ENCODE measurements at regions of chr21 and their contacts with region 1.

Region 1: DNA sequence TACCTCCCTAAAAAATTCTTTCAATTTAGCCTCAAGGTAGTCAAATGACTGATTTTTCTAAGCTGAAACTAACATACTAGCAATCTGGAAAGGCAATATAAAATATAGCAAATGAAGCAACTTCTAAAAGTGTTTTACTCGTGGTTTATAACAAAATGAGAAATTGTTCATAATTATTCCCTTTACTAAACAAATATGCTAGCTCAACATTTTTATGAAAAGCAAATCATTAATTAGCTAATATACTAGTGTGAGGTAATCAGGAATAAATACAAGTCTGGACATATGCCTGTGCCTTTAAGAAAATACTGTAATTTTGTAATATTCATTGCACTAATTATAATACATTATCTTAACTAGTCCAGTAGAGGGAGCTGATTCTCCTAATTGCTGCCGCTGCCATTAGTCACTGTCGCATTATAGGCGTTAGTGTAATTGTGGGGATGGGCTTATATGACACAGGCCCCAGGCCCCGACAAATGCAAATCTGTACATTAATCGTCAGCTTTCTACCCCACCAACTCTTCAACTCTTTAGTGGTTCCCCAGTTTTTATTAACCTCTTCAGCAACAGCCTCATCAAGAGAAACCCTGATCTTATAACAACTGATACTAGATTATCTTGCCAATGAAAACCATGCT is 160.9 kb downstream of the GABPA start:
- DNase-seq: no peak
- H3K4me3 Mint-ChIP-seq: no peak overlapping the region
- H3K27ac Mint-ChIP-seq: no peak overlapping the region
- H3K4me1 Mint-ChIP-seq: peaks cover 11% of the 10 kb centered on the region
- H3K27me3 Mint-ChIP-seq: no peaks in the 10 kb centered on the region

Region 2: DNA sequence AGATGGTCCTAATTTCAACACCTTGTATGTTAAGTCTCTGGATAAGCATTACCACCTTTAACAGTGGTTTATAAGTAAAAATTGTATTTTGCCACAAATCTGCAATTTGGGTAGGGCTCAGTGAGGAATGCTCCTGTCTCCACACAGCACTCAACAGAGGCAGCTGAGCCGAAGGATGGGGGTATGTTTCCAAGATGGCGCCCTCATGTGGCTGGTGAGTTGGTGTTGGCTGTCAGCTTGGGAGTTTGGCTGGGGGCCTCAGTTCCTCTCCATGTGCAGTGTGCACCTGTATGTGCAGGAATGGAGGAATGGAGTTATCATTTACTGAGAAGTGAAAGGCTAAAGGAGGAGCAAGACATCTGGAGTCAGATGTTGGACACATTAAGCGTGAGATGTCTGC is 24.1 kb before region 1 on chr21:
- intact Hi-C with region 1: no loop called
- DNase-seq: no peak
- H3K4me3 Mint-ChIP-seq: no peak overlapping the region
- H3K27ac Mint-ChIP-seq: no peak overlapping the region
- H3K4me1 Mint-ChIP-seq: no peaks in the 10 kb centered on the region
- H3K27me3 Mint-ChIP-seq: peaks cover 3% of the 10 kb centered on the region

Region 3: GRCh38 chr21:26067836-26068594 is 172.3 kb after region 1 on chr21:
- intact Hi-C with region 1: loop called (anchors 10 kb)
- DNase-seq: no peak
- H3K4me3 Mint-ChIP-seq: no peak overlapping the region
- H3K27ac Mint-ChIP-seq: peak overlapping the region; percentile 17
- H3K4me1 Mint-ChIP-seq: peaks cover 44% of the 10 kb centered on the region
- H3K27me3 Mint-ChIP-seq: no peaks in the 10 kb centered on the region

Region 4: DNA sequence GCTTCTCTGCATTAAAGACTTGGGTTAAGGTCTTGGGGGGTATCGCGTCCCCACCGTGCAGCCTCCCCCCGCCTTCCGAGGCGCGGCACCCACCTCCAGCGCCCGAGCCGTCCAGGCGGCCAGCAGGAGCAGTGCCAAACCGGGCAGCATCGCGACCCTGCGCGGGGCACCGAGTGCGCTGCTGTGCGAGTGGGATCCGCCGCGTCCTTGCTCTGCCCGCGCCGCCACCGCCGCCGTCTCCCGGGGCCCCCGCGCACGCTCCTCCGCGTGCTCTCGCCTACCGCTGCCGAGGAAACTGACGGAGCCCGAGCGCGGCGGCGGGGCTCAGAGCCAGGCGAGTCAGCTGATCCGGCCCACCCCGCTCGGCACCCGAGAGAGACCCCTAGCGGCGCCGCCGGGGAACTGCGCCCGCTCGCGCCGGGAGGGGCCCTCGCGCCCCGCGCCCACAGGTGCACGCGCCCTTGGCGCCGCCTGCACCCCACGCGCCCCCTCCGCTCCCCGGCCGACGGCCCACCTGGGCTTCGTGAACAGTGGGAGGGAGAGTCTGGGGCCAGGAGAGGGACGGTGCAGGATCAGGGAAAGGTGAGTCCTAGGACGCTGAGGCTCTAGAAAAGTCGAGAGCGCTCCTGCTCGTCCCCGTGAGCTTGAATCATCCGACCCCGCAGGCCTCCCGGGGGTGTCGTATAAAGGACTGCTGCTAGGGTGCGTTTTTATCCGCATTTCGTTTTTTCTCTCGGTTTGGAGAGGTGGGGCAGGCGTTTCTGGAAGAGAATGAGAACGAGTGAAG is 275.0 kb after region 1 on chr21 and contains the start of gene APP:
- intact Hi-C with region 1: loop called (anchors 1 kb)
- DNase-seq: peak; percentile 86
- H3K4me3 Mint-ChIP-seq: peak within 1 kb of the TSS; percentile 94
- H3K27ac Mint-ChIP-seq: peak within 1 kb of the TSS; percentile 78
- H3K4me1 Mint-ChIP-seq: peaks cover 35% of the 10 kb centered on the region
- H3K27me3 Mint-ChIP-seq: peaks cover 6% of the 10 kb centered on the region
- total RNA-seq, gene APP: 85.7 and 86.5 TPM in 2 replicates

Region 5: GRCh38 chr21:26715878-26716506 is 820.3 kb after region 1 on chr21:
- intact Hi-C with region 1: loop called (anchors 5 kb)
- DNase-seq: no peak
- H3K4me3 Mint-ChIP-seq: no peak overlapping the region
- H3K27ac Mint-ChIP-seq: no peak overlapping the region
- H3K4me1 Mint-ChIP-seq: no peaks in the 10 kb centered on the region
- H3K27me3 Mint-ChIP-seq: no peaks in the 10 kb centered on the region